ENCODE measurements at regions of chr3 and their contacts with region 1.

Region 1: DNA sequence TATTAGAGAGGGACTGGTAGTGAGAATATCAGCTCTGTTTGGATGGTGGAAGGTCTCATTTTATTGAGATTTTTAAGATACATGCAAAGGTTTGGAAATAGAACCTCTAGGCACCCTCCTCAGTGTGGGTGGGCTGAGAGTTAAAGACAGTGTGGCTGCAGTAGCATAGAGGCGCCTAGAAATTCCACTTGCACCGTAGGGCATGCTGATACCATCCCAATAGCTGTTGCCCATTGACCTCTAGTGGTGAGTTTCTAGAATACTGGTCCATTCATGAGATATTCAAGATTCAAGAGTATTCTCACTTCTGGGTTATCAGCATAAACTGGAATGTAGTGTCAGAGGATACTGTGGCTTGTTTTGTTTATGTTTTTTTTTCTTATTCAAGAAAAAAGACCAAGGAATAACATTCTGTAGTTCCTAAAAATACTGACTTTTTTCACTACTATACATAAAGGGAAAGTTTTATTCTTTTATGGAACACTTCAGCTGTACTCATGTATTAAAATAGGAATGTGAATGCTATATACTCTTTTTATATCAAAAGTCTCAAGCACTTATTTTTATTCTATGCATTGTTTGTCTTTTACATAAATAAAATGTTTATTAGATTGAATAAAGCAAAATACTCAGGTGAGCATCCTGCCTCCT is 87.2 kb downstream of the TGFBR2 start:
- DNase-seq: peak; percentile 82
- ATAC-seq: peak; percentile 49
- H3K4me3 ChIP-seq: no peak overlapping the region
- H3K27ac ChIP-seq: peak overlapping the region; percentile 0; the same call in 1 of the 2 replicates
- H3K4me1 ChIP-seq: peaks cover 35% of the 10 kb centered on the region
- H3K27me3 ChIP-seq: no peaks in the 10 kb centered on the region
- CTCF ChIP-seq: peak; percentile 94

Region 2: DNA sequence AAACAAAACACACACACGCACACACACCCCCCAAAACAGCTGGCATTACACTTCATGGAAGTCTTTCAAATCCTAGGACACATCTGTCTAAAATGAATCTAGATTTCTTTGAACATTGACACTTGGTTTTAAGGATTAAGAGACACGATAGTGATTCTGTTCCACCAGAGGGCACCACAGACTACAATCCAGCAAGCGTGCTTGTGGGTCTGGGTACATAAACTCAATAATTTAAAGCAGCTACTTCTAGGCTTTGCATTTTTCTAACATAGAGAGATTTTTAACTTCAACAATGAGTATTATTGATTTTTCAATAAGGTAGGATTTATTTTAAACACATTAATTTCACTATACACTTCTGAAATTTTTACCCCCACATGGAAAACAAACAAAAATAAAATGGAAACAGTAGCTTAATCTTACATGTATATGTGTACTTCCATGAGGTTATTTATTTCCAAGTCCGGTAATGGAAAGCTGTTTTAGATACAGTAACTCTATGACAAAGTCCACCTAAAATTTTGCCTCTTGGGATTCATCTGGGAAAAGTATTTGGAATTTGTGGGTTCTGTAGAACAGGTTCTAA is 651.2 kb before region 1 on chr3:
- CTCF ChIA-PET with region 1: interaction called, 10 read pairs
- POLR2A ChIA-PET with region 1: no interaction called
- intact Hi-C with region 1: loop called (anchors 1 kb)
- DNase-seq: peak; percentile 84
- ATAC-seq: peak; percentile 87
- H3K4me3 ChIP-seq: no peak overlapping the region
- H3K27ac ChIP-seq: no peak overlapping the region
- H3K4me1 ChIP-seq: no peaks in the 10 kb centered on the region
- H3K27me3 ChIP-seq: no peaks in the 10 kb centered on the region
- CTCF ChIP-seq: peak; percentile 93

Region 3: GRCh38 chr3:30199096-30199759 is 494.4 kb before region 1 on chr3:
- CTCF ChIA-PET with region 1: interaction called, 3 read pairs
- POLR2A ChIA-PET with region 1: no interaction called
- intact Hi-C with region 1: loop called (anchors 1 kb)
- DNase-seq: peak; percentile 77
- ATAC-seq: peak; percentile 59
- H3K4me3 ChIP-seq: no peak overlapping the region
- H3K27ac ChIP-seq: no peak overlapping the region
- H3K4me1 ChIP-seq: no peaks in the 10 kb centered on the region
- H3K27me3 ChIP-seq: no peaks in the 10 kb centered on the region
- CTCF ChIP-seq: peak; percentile 93

Region 4: GRCh38 chr3:30342319-30343060 is 351.1 kb before region 1 on chr3:
- CTCF ChIA-PET with region 1: no interaction called
- POLR2A ChIA-PET with region 1: no interaction called
- intact Hi-C with region 1: loop called (anchors 5 kb)
- DNase-seq: peak; percentile 99
- ATAC-seq: peak; percentile 64
- H3K4me3 ChIP-seq: peak overlapping the region; percentile 28; the same call in 1 of the 2 replicates
- H3K27ac ChIP-seq: peak overlapping the region; percentile 98
- H3K4me1 ChIP-seq: peaks cover 59% of the 10 kb centered on the region
- H3K27me3 ChIP-seq: no peaks in the 10 kb centered on the region
- CTCF ChIP-seq: no peak

Region 5: DNA sequence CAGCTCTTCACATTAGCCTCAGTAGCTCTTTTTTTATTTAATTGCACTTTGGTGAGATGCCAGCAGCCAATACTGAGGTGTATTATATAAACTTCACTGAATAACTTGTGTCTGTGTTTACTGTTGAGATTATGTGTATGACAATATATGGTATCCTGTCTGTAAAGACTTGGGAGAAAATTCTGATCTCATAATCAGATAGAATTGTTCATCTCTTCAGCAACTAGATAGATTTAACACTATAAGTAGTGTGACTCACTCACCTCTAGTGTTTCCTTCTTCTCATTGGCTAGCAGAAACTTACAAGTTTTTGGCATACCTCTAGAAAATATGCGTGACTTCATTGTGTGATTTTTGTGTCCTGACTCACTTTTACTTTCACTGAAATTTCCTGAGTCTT is 154.8 kb before region 1 on chr3:
- CTCF ChIA-PET with region 1: no interaction called
- POLR2A ChIA-PET with region 1: no interaction called
- intact Hi-C with region 1: loop called (anchors 2 kb)
- DNase-seq: peak; percentile 96
- ATAC-seq: peak; percentile 95
- H3K4me3 ChIP-seq: no peak overlapping the region; the same call in 1 of the 2 replicates
- H3K27ac ChIP-seq: peak overlapping the region; percentile 99
- H3K4me1 ChIP-seq: peaks cover 23% of the 10 kb centered on the region
- H3K27me3 ChIP-seq: no peaks in the 10 kb centered on the region
- CTCF ChIP-seq: no peak

Region 6: DNA sequence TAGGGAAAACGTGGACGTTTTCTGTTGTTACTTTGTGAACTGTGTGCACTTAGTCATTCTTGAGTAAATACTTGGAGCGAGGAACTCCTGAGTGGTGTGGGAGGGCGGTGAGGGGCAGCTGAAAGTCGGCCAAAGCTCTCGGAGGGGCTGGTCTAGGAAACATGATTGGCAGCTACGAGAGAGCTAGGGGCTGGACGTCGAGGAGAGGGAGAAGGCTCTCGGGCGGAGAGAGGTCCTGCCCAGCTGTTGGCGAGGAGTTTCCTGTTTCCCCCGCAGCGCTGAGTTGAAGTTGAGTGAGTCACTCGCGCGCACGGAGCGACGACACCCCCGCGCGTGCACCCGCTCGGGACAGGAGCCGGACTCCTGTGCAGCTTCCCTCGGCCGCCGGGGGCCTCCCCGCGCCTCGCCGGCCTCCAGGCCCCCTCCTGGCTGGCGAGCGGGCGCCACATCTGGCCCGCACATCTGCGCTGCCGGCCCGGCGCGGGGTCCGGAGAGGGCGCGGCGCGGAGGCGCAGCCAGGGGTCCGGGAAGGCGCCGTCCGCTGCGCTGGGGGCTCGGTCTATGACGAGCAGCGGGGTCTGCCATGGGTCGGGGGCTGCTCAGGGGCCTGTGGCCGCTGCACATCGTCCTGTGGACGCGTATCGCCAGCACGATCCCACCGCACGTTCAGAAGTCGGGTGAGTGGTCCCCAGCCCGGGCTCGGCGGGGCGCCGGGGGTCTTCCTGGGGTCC is 87.1 kb before region 1 on chr3 and contains the start of gene TGFBR2:
- CTCF ChIA-PET with region 1: interaction called, 7 read pairs
- POLR2A ChIA-PET with region 1: interaction called, 5 read pairs
- intact Hi-C with region 1: loop called (anchors 1 kb)
- DNase-seq: peak; percentile 98
- ATAC-seq: peak; percentile 90
- H3K4me3 ChIP-seq: peak within 1 kb of the TSS; percentile 94
- H3K27ac ChIP-seq: peak within 1 kb of the TSS; percentile 88
- H3K4me1 ChIP-seq: peaks cover 49% of the 10 kb centered on the region
- H3K27me3 ChIP-seq: no peaks in the 10 kb centered on the region
- CTCF ChIP-seq: no peak; the same call in 1 of the 2 replicates
- total RNA-seq, gene TGFBR2: 48.2 and 55.9 TPM in 2 replicates

Region 7: DNA sequence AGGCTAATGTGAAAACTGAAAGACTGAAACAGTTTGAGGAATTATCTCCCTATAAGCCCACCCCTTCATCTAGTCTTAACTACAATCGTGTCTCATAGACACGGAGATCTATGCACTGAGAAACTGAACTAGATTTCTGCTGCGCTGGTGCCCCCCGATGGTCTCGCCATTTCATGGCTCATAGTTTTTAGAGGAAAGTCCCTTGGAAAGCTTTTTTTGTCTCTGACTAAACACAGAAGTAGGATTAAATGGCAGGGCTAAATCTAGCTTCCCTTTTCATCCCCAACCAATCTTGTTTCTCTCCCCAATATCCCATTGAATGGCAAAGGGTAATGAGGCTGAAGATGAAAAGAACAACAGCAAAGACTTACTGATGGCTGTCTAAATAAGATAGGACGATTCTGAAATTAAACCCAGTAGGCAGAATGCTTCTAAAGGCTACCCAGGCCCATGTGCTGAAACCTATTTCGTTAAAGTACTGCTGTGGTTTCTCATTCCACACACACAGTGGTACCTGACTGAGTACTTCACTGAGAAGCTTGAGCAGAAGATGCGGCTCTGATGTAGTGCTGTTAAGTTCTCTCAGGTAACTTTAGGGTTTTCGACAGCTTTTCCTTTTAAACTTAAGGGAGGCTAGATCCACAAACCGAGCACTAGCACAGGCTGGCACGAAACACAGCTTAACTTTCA is 58.2 kb after region 1 on chr3:
- CTCF ChIA-PET with region 1: interaction called, 3 read pairs
- POLR2A ChIA-PET with region 1: no interaction called
- intact Hi-C with region 1: loop called (anchors 1 kb)
- DNase-seq: peak; percentile 62
- ATAC-seq: peak; percentile 12; the same call in 1 of the 2 replicates
- H3K4me3 ChIP-seq: no peak overlapping the region
- H3K27ac ChIP-seq: no peak overlapping the region
- H3K4me1 ChIP-seq: peaks cover 44% of the 10 kb centered on the region
- H3K27me3 ChIP-seq: no peaks in the 10 kb centered on the region
- CTCF ChIP-seq: peak; percentile 68